ENCODE measurements at regions of chr4 and their contacts with region 1.

Region 1: DNA sequence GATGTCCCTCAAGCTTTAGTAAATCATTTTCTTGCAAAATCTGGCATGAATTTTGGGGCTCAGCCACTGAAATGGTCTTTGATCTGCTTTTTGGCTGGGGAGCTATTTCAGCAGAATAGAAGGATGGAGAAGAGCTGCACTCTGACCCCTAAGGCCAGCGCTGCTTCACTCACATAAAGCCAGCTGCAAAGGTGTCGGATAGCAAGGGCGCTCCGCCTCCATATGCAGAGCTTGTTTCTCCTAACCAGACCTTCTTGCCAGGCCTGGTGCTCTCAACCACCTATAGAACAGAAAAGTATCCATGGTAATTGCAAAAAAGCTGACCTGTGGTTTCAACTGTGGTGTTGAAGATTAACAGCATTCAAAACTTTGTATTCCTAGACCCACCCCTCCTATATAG is 24.1 kb upstream of the COQ2 start:
- DNase-seq: no peak
- H3K4me3 ChIP-seq: no peak overlapping the region
- H3K27ac ChIP-seq: no peak overlapping the region
- H3K4me1 ChIP-seq: no peaks in the 10 kb centered on the region
- H3K27me3 ChIP-seq: no peaks in the 10 kb centered on the region
- CTCF ChIP-seq: no peak

Region 2: DNA sequence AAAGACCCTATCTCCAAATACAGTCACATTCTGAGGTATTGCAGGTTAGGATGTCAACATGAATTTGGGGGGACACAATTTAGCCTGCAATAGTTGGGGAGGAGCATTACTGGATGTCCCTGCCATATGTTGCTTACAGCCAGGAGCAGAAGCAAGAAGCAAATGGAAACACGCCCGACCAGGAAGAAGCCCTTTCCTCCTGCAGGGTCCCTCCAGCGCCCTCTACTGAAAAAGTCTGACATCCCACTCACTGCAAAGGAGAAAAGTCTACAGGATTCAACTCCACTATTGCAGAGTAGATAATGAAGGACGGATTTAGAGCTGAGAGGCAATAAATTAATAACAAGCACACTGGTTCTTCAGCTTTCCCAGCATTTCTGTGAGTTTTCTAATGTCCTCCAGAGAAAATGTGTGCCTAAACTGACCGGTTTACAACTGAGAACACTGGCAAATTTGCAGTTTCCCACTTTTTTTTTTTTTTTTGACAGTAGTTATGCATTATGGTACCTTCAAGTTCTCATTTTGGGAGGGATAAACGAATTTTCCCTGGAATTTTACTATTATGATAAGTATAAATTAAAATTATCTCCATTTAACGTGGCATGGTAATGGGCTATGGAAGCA is 55.8 kb before region 1 on chr4:
- CTCF ChIA-PET with region 1: no interaction called
- POLR2A ChIA-PET with region 1: no interaction called
- intact Hi-C with region 1: no loop called
- DNase-seq: peak; percentile 39 to 51
- H3K4me3 ChIP-seq: no peak overlapping the region
- H3K27ac ChIP-seq: no peak overlapping the region
- H3K4me1 ChIP-seq: peaks cover 34% of the 10 kb centered on the region
- H3K27me3 ChIP-seq: no peaks in the 10 kb centered on the region
- CTCF ChIP-seq: peak; percentile 69

Region 3: GRCh38 chr4:83548151-83548905 is 239.7 kb after region 1 on chr4:
- CTCF ChIA-PET with region 1: no interaction called
- POLR2A ChIA-PET with region 1: interaction called, 10 read pairs
- intact Hi-C with region 1: no loop called
- DNase-seq: peak; percentile 79 to 94
- H3K4me3 ChIP-seq: peak overlapping the region; percentile 21; the same call in 1 of the 2 replicates
- H3K27ac ChIP-seq: peak overlapping the region; percentile 100
- H3K4me1 ChIP-seq: peaks cover 61% of the 10 kb centered on the region
- H3K27me3 ChIP-seq: no peaks in the 10 kb centered on the region
- CTCF ChIP-seq: no peak

Region 4: GRCh38 chr4:83560523-83560922 is 251.9 kb after region 1 on chr4:
- CTCF ChIA-PET with region 1: no interaction called
- POLR2A ChIA-PET with region 1: no interaction called
- intact Hi-C with region 1: no loop called
- DNase-seq: no peak
- H3K4me3 ChIP-seq: no peak overlapping the region
- H3K27ac ChIP-seq: peak overlapping the region; percentile 82
- H3K4me1 ChIP-seq: peaks cover 58% of the 10 kb centered on the region
- H3K27me3 ChIP-seq: no peaks in the 10 kb centered on the region
- CTCF ChIP-seq: no peak

Measured in PC-9 (cell line).